BJ (cell line): ENCODE measurements at regions of chr1 and their contacts with region 1.

Region 1: DNA sequence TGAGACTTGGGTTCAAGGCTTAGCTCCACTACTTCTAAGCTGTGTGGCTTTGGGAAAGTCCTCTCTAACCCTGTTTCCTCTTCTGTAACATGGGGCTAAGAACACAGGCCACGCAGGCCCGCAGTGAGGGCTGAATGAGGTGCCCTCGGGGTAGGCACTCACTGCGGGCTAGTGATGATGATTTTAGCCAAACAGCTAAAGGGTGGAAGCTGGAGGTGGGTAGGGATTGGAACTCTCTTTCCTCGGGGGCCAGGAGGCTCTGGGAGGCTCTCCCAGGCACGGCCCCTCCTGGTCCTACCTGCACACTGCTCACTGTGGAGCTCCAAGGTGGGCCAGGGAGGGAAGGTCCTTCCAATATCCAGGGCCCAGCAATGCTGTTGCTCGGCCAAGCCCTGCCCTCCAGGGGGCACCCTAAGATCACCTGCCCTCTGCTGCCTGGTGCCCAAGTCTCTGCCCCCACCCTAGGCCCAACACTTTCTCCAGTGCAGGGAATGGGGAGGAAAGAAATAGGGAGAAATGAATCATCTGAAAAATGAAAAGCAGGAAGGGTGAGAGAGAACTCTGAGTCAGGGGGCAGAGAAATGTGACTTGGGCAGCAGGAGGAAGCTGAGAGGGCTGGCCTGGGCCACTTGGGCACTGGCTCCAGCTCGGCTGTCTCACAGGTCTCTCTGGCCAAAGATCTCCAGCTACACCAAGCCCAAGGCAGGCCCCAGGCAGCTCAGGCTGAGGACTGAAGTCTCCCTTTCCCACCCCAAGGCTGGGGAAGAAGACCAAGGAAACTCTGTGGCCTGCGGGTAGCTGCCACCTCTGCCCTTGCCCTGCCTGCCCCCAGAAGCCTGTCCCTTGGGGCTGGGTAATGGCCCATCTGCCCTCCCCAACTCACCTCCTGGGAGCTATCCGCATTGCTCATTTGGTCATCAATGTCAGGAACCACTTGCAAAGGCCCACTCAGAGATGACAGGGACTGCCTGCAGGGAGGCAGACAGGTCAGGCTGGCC is 19.3 kb upstream of the EVA1B start:
- DNase-seq: no peak
- H3K4me3 ChIP-seq: no peak overlapping the region
- H3K27me3 ChIP-seq: no peaks in the 10 kb centered on the region
- CTCF ChIP-seq: peak; percentile 81

Region 2: DNA sequence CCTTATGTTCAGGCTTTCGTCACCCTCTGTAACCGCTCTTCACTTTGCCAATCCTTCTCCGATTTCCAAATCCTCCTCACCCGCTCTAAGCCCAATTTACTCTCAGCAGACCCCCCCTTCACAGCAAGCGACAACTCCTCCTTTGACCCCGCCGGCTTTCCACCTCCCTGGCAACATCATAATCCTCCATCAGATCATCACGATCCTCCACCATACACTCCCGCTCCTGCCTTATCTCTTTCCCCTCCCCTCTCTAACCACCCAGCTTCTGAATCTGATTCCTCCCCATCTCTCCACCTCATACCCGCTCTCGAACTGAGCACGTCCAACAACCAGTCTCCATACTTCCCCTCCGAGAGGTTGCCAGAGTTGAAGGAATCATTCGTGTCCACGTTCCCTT is 11.8 kb before region 1 on chr1:
- CTCF ChIA-PET with region 1: interaction called, 16 read pairs
- POLR2A ChIA-PET with region 1: no interaction called
- DNase-seq: no peak
- H3K4me3 ChIP-seq: no peak overlapping the region
- H3K27me3 ChIP-seq: no peaks in the 10 kb centered on the region
- CTCF ChIP-seq: no peak

Region 3: GRCh38 chr1:36369061-36369861 is 26.5 kb after region 1 on chr1:
- CTCF ChIA-PET with region 1: interaction called, 88 read pairs
- POLR2A ChIA-PET with region 1: no interaction called
- DNase-seq: no peak
- H3K4me3 ChIP-seq: no peak overlapping the region
- H3K27me3 ChIP-seq: no peaks in the 10 kb centered on the region
- CTCF ChIP-seq: peak; percentile 94

Region 4: GRCh38 chr1:36411674-36412520 is 69.1 kb after region 1 on chr1:
- CTCF ChIA-PET with region 1: interaction called, 18 read pairs
- POLR2A ChIA-PET with region 1: no interaction called
- DNase-seq: no peak
- H3K4me3 ChIP-seq: no peak overlapping the region
- H3K27me3 ChIP-seq: no peaks in the 10 kb centered on the region
- CTCF ChIP-seq: no peak